ENCODE measurements at regions of chr14 and their contacts with region 1.

Region 1: GRCh38 chr14:70086685-70087379 is 101.9 kb downstream of the SLC8A3 start:
- DNase-seq: peak; percentile 22
- H3K4me3 ChIP-seq: no peak overlapping the region
- H3K27ac ChIP-seq: peak overlapping the region in 1 of 2 experiments; percentile 81; a peak in 2 of 4 replicates
- H3K4me1 ChIP-seq: peaks cover 0 to 16% of the 10 kb centered on the region in 2 experiments; a peak in 2 of 4 replicates
- H3K27me3 ChIP-seq: no peaks in the 10 kb centered on the region
- CTCF ChIP-seq: peak; percentile 60
- EP300 ChIP-seq: peak in 1 of 2 experiments; percentile 53; a peak in 1 of 4 replicates
- RAD21 ChIP-seq: peak; percentile 78

Region 2: DNA sequence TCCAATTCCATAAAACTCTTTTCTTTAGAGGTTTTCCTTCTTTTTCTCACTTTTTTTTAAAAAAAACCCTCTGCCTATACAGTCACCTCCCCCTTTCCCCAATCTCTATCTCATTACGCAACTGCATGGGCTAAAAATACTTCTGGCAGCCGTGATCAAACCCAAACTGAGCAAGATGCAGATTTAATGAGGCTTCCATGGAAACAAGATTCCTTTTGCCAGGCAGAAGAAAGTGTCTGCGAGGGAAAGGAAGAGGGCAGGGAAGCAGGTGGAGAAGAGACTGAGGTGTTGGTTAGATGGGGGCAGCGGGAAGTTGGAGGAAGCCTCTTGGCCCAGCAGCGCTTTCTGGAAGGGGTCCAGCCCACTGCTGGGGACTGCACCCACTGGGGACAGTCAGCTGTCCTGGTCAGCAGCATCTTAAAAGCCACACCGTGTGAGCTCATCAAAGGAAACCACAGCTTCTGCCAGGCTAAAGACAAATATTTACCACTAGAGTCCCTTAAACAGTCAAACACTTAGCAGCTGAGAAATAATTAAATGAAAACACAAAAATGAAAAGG is 11.5 kb after region 1 on chr14:
- CTCF ChIA-PET with region 1: interaction called, 10 read pairs
- POLR2A ChIA-PET with region 1: no interaction called
- DNase-seq: no peak
- H3K4me3 ChIP-seq: no peak overlapping the region
- H3K27ac ChIP-seq: peak overlapping the region in 1 of 2 experiments; percentile 99; a peak in 2 of 4 replicates
- H3K4me1 ChIP-seq: peaks cover 0 to 56% of the 10 kb centered on the region in 2 experiments; a peak in 2 of 4 replicates
- H3K27me3 ChIP-seq: no peaks in the 10 kb centered on the region
- CTCF ChIP-seq: no peak
- EP300 ChIP-seq: no peak
- RAD21 ChIP-seq: no peak

Region 3: GRCh38 chr14:70317969-70318634 is 231.3 kb after region 1 on chr14:
- CTCF ChIA-PET with region 1: interaction called, 21 read pairs
- POLR2A ChIA-PET with region 1: no interaction called
- DNase-seq: peak; percentile 63
- H3K4me3 ChIP-seq: no peak overlapping the region; a peak in 1 of 4 replicates
- H3K27ac ChIP-seq: no peak overlapping the region
- H3K4me1 ChIP-seq: no peaks in the 10 kb centered on the region; a peak in 1 of 4 replicates
- H3K27me3 ChIP-seq: no peaks in the 10 kb centered on the region
- CTCF ChIP-seq: peak; percentile 58
- EP300 ChIP-seq: no peak
- RAD21 ChIP-seq: peak; percentile 95

Measured in SK-N-SH (cell line).